Breast epithelium (tissue), 4 donors: ENCODE measurements at regions of chr21 and their contacts with region 1.

Region 1: DNA sequence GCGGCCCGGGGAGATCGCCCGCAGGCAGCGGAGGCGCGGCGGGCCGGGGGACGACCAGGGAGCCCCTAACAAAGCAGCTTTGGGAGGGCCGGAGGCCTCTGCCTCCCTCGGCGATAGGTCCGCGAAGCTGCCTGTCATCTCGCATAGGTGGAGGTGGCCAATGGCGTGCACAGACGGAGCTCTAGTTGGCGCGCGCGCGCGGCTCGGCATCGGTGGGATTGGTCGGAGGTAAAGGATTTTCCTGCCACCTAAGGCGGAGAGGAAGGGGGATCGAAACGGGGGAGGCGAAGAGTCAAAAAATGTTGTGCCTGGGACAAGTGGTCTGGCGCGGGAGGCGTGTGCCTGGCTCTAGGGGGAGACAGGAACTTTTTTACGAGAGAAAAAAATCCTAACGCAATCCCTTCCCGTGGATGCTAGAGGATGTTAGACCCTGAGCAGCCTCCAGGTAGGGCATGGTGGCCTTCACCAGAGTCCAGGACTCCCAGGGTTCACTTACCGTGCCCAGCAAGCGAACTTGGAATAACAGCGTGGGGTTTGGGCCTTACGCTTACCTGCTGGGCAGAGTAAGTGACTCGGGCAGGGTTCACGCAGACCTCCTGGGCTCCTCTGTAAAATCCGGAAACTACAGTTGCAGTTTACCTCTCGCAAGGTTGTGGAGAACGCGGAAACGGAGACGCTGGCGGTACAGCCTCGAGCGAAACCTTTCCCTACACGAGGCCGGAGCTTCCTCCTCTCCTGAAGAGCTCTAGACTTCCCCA is 99.9 kb upstream of the SOD1 start:
- DNase-seq: peak; percentile 83 to 86
- H3K4me3 ChIP-seq: peak overlapping the region; percentile 47 to 91 (median 69)
- H3K27ac ChIP-seq: peak overlapping the region; percentile 43 to 50
- H3K4me1 ChIP-seq: peaks cover 0 to 17% of the 10 kb centered on the region in 2 donors
- H3K27me3 ChIP-seq: peaks cover 7 to 16% of the 10 kb centered on the region in 2 donors
- CTCF ChIP-seq: no peak
- POLR2A ChIP-seq: no peak

Region 2: DNA sequence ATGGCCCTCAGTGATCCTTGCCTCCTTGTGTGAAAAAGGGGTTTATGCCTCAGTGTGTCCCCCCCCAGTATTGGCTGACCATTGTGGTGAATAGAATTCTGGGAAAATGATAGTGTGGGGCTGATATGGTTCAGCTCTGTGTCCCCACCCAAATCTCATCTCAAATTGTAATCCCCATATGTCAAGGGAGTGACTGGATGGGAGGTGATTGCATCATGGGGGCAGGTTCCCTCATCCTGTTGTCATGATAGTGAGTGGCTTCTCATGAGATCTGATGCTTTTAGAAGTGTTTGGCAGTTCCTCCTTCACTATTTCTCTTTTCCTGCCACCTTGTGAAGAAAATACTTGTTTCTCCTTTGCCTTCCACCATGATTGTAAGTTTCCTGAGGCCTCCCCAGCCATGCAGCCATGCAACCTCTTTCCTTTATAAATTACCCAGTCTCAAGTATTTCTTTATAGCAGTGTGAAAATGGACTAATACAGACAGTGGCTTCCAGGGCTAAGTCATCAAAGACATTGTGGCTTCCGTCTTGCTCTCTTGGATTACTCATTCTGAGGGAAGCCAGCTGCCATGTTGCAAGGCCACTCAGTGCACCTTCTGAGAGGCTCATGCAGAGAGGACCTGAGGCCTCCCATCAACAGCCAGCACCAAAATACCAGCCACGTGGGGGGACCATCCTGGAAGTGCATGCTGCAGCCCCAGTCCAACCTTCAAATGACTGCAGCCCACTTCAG is 59.3 kb after region 1 on chr21:
- intact Hi-C with region 1: loop called (anchors 2 kb)
- DNase-seq: no peak
- H3K4me3 ChIP-seq: no peak overlapping the region
- H3K27ac ChIP-seq: no peak overlapping the region
- H3K4me1 ChIP-seq: no peaks in the 10 kb centered on the region
- H3K27me3 ChIP-seq: no peaks in the 10 kb centered on the region
- CTCF ChIP-seq: no peak
- POLR2A ChIP-seq: no peak